GM12878 (cell line): ENCODE measurements at regions of chr15 and their contacts with region 1.

Region 1: DNA sequence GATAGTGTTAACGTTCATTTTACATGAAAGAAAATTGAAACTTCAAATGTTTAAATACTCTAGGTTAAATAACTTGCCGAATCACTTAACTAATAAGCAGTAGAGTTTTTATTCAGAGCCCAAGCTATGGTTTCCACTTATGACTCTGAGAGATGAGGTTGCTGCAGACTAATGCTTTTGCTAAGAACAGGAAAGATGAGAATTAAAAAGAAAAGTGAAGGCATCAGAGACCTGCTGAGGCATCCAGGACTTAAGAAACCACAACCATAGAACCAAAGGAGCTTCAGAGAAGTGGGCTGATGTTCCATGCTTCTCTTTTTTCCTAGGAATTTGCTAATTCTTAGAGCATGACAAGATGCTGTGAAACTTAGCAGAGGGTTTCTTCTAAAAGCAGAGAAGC is 9.5 kb downstream of the HMG20A start:
- DNase-seq: no peak
- ATAC-seq: peak; percentile 71
- H3K4me3 ChIP-seq: no peak overlapping the region
- H3K27ac ChIP-seq: peak overlapping the region; percentile 20
- H3K4me1 ChIP-seq: peaks cover 7% of the 10 kb centered on the region
- H3K27me3 ChIP-seq: no peaks in the 10 kb centered on the region
- CTCF ChIP-seq: no peak
- EP300 ChIP-seq: no peak
- POLR2A ChIP-seq: no peak
- RAD21 ChIP-seq: no peak

Region 2: DNA sequence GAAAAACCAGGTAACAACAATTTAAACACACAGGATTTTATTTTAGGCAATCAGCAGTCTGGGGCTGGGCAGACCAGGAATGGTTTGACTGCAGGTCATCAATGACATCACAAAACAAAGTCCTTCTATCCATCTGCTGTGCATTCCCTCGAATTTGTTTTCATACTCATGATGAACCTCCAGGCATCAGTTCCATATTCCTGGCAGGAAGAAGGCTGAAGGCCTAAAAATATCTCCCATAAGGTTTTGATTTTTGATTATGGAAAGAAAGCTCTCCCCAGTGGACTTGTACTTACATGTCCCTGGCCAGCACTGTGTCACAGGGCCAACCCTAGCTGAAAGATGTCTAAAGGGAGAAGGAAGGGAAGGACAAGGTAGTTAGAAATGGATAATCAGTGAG is 117.7 kb before region 1 on chr15:
- CTCF ChIA-PET with region 1: no interaction called
- POLR2A ChIA-PET with region 1: no interaction called
- RAD21 ChIA-PET with region 1: no interaction called
- SMC1A ChIA-PET with region 1: no interaction called
- in situ Hi-C with region 1: no loop called
- intact Hi-C with region 1: no loop called
- DNase-seq: no peak
- ATAC-seq: no peak
- H3K4me3 ChIP-seq: no peak overlapping the region
- H3K27ac ChIP-seq: no peak overlapping the region
- H3K4me1 ChIP-seq: peaks cover 7% of the 10 kb centered on the region; the same call in 1 of the 2 replicates
- H3K27me3 ChIP-seq: no peaks in the 10 kb centered on the region
- CTCF ChIP-seq: no peak
- EP300 ChIP-seq: no peak
- POLR2A ChIP-seq: no peak
- RAD21 ChIP-seq: no peak

Region 3: GRCh38 chr15:77419836-77420609 is 10.2 kb before region 1 on chr15 and contains the start of gene PEAK1:
- CTCF ChIA-PET with region 1: interaction called, 13 read pairs
- POLR2A ChIA-PET with region 1: interaction called, 11 read pairs
- RAD21 ChIA-PET with region 1: interaction called, 4 read pairs
- SMC1A ChIA-PET with region 1: interaction called, 18 read pairs
- in situ Hi-C with region 1: no loop called
- intact Hi-C with region 1: no loop called
- DNase-seq: peak; percentile 86
- ATAC-seq: peak; percentile 93
- H3K4me3 ChIP-seq: peak within 1 kb of the TSS; percentile 84
- H3K27ac ChIP-seq: peak within 1 kb of the TSS; percentile 98
- H3K4me1 ChIP-seq: no peaks in the 10 kb centered on the region; the same call in 1 of the 2 replicates
- H3K27me3 ChIP-seq: no peaks in the 10 kb centered on the region
- CTCF ChIP-seq: no peak
- EP300 ChIP-seq: no peak
- POLR2A ChIP-seq: peak; percentile 91
- RAD21 ChIP-seq: no peak
- polyA plus RNA-seq, gene PEAK1: 0.62 to 1.1 TPM

Region 4: DNA sequence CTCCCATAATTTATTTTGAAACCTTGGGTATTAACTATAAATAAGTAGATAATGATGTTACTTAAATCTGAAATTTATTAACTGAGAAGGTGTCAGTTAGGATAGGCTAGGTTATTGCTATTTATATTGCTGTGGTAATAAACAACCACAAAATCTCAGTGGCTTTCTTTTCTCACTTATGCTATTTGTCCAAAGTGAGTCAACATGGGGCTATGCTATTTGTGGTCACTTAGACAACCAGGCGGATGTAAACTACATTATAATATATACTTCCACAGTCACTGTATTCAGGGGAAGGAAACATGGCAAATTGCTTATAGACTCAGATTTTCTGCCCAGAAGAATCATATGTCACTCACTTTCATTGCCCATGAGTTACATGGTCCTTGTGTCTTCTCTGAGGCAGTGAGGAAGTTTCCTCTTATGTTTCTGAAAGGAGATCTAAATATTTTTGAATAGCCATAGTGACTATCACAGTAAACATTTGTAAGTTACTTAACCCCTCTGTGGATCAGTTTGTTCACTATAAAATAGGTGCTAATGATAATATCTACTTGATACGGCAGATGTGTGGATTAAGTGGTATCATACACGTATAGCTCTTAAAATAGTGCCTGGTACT is 10.3 kb after region 1 on chr15:
- CTCF ChIA-PET with region 1: interaction called, 5 read pairs
- POLR2A ChIA-PET with region 1: interaction called, 3 read pairs
- RAD21 ChIA-PET with region 1: interaction called, 5 read pairs
- SMC1A ChIA-PET with region 1: interaction called, 15 read pairs
- in situ Hi-C with region 1: no loop called
- intact Hi-C with region 1: no loop called
- DNase-seq: peak; percentile 48
- ATAC-seq: peak; percentile 96
- H3K4me3 ChIP-seq: no peak overlapping the region
- H3K27ac ChIP-seq: no peak overlapping the region
- H3K4me1 ChIP-seq: peaks cover 25% of the 10 kb centered on the region
- H3K27me3 ChIP-seq: no peaks in the 10 kb centered on the region
- CTCF ChIP-seq: no peak
- EP300 ChIP-seq: peak; percentile 63 to 73
- POLR2A ChIP-seq: no peak
- RAD21 ChIP-seq: no peak